Colonic mucosa (tissue), 4 donors: ENCODE measurements at regions of chr14 and their contacts with region 1.

Region 1: DNA sequence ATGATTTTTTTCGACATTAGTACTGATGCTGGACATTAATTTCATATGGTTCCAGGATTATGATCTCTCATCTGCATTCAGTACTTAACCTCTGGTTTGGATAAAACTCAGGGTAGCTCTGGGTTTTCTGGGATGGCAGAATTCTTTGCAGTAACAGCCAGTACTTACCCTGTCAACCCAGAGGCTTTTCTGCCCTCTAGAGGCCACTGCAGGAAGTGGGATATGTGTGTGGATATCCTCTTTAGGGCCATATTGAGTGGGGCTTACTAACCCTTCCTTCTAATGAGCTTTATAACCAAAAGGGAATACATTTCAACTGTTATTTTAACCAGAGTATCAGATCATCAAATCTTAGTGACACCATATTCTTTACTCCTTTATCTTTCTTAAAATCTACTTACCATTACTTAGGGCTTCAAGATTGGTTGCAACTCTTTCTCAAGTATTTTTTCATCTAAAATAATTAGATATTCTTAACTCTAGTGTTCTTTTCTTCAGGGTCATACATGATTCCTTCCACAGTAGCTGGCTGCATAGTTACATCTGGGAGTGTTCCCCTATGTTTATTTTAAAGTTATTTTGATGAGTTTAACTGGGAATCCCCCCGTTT is 488.0 kb upstream of the STXBP6 start:
- DNase-seq: peak; percentile 52
- H3K4me3 ChIP-seq: no peak overlapping the region
- H3K27ac ChIP-seq: no peak overlapping the region
- H3K4me1 ChIP-seq: no peaks in the 10 kb centered on the region
- H3K27me3 ChIP-seq: no peaks in the 10 kb centered on the region
- CTCF ChIP-seq: peak; percentile 38

Region 2: GRCh38 chr14:25308244-25308643 is 229.7 kb before region 1 on chr14:
- intact Hi-C with region 1: no loop called
- DNase-seq: peak; percentile 51
- H3K4me3 ChIP-seq: no peak overlapping the region
- H3K27ac ChIP-seq: no peak overlapping the region
- H3K4me1 ChIP-seq: no peaks in the 10 kb centered on the region
- H3K27me3 ChIP-seq: no peaks in the 10 kb centered on the region
- CTCF ChIP-seq: no peak

Region 3: GRCh38 chr14:25400607-25401206 is 137.2 kb before region 1 on chr14:
- intact Hi-C with region 1: no loop called
- DNase-seq: peak; percentile 75
- H3K4me3 ChIP-seq: no peak overlapping the region
- H3K27ac ChIP-seq: no peak overlapping the region
- H3K4me1 ChIP-seq: no peaks in the 10 kb centered on the region
- H3K27me3 ChIP-seq: no peaks in the 10 kb centered on the region
- CTCF ChIP-seq: peak; percentile 69

Region 4: DNA sequence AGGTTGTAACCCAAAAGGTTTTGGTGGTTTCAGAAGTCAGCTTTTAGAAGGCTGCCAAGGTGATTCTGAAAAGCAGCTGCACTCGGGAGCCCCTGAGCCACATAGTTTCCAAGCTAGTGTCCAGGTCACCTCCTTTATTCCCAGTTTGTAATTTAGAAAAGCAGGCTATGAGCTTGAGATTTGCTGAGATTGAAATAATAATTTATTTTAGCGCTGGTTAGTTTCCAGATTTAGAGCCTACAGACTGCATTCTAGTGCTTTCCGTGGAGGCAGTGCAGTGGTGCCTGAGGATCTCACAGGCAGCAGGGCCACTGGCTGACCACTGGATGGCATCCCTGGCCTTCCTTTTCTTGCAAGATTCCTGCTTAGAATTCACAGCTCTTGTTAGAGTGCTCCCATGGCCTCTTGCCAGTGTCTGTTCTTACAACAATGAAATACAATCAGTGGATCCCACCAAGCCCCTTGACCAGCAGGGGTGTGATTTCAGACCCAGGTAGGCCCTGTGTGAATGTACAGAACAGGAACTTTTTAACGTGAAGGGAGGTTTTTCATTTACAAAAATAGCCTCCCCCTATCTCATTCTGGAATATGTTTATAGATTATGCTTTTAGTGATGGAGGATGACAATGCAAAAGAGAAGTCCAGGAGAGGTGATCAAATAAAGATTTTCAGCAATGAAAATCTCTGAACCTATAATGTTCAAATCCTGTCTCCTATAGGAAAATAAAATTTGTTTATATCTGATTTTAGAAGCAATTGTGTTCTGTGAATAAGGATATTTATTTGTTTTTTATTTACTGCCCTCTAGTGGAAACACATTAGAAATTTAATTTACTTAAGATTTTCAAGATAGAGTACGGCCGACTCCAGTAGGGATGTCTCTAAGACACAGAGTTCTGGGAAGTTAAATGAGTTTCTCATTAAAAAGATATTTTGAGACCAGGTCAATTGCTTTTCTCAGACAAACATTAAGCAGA is 125.9 kb before region 1 on chr14:
- intact Hi-C with region 1: loop called (anchors 10 kb)
- DNase-seq: no peak
- H3K4me3 ChIP-seq: no peak overlapping the region
- H3K27ac ChIP-seq: no peak overlapping the region
- H3K4me1 ChIP-seq: no peaks in the 10 kb centered on the region
- H3K27me3 ChIP-seq: no peaks in the 10 kb centered on the region
- CTCF ChIP-seq: peak; percentile 15

Region 5: DNA sequence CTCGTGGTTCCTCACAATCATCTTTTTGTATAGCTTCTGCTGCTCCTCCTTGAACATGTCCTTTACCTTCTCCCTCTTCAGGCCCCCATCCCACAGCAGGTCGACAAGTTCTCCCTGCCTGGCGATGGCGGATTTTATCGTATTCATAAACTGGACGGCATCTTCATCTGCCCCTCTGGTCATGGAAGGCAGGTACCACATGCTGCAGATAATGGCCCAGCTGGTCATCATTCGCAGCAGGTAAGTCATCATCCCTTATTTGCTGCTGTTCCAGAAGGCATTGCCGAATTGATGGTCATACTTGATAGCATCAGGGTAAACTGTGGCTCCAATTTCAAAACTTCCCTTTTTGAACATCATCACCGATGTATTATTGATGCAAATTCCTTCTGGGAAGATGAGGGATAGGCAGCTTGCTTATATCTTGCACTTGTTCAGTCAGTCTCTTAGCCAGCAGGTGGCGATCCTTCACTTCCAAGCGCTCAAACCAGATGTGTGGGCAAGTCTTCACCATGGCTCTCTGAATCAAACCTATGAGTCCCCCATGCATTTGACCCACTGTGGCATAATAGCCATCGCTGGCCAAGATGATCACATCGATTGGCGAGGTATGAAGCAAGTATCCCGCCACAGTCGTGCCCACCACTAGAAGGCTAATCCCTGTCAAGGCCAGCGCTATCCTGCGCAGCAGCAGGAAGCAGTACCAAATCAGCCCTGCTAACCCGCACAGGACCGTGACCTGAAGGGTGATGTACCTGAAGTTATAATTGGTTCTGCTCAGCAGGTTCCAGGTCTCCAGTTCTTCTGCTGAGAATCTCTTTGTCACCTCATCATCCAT is 106.5 kb before region 1 on chr14:
- intact Hi-C with region 1: loop called (anchors 5 kb)
- DNase-seq: peak; percentile 31
- H3K4me3 ChIP-seq: no peak overlapping the region
- H3K27ac ChIP-seq: no peak overlapping the region
- H3K4me1 ChIP-seq: no peaks in the 10 kb centered on the region
- H3K27me3 ChIP-seq: no peaks in the 10 kb centered on the region
- CTCF ChIP-seq: peak; percentile 16